ENCODE measurements at regions of chr10 and their contacts with region 1.

Region 1: GRCh38 chr10:133516057-133516456 is 11.1 kb upstream of the CYP2E1 start:
- DNase-seq: no peak
- H3K4me3 ChIP-seq: no peak overlapping the region
- H3K27ac ChIP-seq: no peak overlapping the region
- H3K4me1 ChIP-seq: no peaks in the 10 kb centered on the region
- CTCF ChIP-seq: no peak

Region 2: GRCh38 chr10:133166828-133167692 is 349.0 kb before region 1 on chr10:
- CTCF ChIA-PET with region 1: no interaction called
- POLR2A ChIA-PET with region 1: no interaction called
- intact Hi-C with region 1: no loop called
- DNase-seq: no peak
- H3K4me3 ChIP-seq: no peak overlapping the region
- H3K27ac ChIP-seq: no peak overlapping the region
- H3K4me1 ChIP-seq: no peaks in the 10 kb centered on the region
- CTCF ChIP-seq: no peak

Region 3: DNA sequence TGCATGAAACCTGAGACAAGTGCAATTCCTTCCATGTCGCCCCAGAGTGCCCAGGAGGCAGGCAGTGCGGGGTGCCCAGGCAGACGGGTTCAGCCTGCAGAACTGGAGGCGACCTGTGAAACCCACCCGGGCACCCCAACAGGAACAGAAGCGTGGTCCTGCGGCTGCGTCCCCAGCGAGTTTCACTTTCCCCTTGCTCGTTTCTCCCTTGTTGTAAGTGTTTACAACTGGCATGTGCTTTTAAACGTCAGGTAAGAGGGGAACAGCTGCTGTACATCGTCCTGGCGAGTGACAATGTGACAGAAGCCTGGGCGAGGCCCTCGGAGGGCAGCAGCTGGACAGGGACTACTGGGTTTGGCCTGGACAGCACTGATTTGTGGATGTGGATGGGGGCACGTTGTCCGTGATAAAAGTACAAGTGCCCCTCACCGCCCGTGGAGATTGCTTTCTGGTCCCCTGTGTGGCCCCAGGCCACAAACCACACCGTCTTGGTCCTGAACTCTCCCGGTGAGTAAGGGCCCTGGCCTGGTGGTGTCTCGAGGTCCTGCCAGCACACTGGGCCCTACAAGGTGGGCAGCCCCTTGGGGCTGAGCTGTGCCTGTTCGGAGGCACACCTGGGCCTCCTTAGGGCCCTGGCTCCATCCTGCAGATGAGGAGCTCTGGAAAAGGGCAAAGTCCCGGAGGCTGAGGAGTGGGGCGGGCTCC is 274.4 kb before region 1 on chr10:
- CTCF ChIA-PET with region 1: no interaction called
- POLR2A ChIA-PET with region 1: no interaction called
- intact Hi-C with region 1: loop called (anchors 10 kb)
- DNase-seq: no peak
- H3K4me3 ChIP-seq: peak overlapping the region; percentile 21
- H3K27ac ChIP-seq: no peak overlapping the region
- H3K4me1 ChIP-seq: no peaks in the 10 kb centered on the region
- CTCF ChIP-seq: no peak

Region 4: DNA sequence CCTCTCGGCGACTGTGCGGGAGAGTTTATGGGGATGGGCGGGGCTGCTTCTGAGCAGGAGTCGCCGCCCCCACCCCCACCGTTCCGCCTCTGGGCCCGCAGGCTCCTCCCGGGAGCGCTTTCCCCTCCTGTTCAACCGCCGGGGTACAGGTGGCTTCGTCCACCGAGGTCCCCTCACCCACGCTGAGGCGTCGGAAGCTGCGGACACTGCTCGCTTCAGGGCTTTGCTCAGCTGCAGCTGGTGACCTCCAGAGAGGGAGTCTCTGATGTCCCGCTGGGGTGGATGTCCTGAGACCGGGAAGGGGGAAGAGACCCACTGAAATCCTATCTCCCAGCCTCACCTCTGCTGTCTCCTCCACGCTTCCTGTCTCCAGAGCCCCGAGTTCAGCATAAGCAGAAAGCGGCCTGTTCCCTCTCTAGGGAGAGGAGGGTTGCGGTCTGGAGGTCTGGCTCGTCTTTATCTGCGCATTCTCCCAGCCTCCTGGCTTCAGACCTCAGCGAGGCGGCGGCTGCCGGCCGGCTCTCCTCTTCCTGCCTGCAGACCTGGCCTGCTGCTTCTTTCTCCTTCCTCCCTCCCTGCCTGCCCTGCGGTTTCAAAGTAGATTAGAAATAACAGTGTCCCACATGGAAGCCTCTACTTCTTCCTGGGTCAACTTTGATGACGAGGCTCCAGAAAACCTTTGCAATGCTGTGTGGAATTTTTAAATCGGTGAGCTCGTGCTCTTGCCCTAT is 13.0 kb after region 1 on chr10:
- CTCF ChIA-PET with region 1: no interaction called
- POLR2A ChIA-PET with region 1: no interaction called
- intact Hi-C with region 1: no loop called
- DNase-seq: no peak
- H3K4me3 ChIP-seq: no peak overlapping the region
- H3K27ac ChIP-seq: no peak overlapping the region
- H3K4me1 ChIP-seq: no peaks in the 10 kb centered on the region
- CTCF ChIP-seq: no peak